Right ventricle myocardium inferior (tissue), 1 donor: ENCODE measurements at regions of chr9 and their contacts with region 1.

Region 1: GRCh38 chr9:134434894-134435506 is 108.7 kb downstream of the RXRA start:
- DNase-seq: peak; percentile 97
- ATAC-seq: peak; percentile 86

Region 2: GRCh38 chr9:134163353-134164196 is 271.4 kb before region 1 on chr9:
- intact Hi-C with region 1: loop called (anchors 2 kb)
- DNase-seq: peak; percentile 84
- ATAC-seq: peak; percentile 14

Region 3: DNA sequence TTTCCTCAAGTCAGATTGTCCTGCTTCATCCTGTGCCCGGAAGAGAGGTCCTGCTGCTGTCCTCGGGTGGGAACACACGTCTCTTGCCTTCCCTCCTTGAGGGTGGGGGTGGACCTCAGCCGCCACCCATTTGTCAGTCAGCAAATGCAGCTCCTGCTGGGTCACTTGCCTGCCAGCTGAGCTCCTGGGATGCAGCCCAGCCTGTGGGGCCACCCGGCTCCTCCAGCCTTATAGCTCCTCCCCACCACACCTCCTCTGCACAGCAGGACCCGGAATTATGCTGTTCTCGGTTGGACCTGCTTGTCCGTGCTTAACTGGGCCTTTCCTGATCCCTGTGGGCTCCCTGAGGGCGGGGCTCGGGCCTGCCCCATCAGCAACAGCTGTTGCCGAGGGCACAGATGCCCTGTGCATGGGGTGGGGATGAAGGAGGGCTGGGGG is 56.1 kb before region 1 on chr9:
- intact Hi-C with region 1: loop called (anchors 5 kb)
- DNase-seq: no peak
- ATAC-seq: peak; percentile 31

Region 4: GRCh38 chr9:134407123-134407808 is 27.7 kb before region 1 on chr9:
- intact Hi-C with region 1: loop called (anchors 2 kb)
- DNase-seq: peak; percentile 97
- ATAC-seq: peak; percentile 74

Region 5: DNA sequence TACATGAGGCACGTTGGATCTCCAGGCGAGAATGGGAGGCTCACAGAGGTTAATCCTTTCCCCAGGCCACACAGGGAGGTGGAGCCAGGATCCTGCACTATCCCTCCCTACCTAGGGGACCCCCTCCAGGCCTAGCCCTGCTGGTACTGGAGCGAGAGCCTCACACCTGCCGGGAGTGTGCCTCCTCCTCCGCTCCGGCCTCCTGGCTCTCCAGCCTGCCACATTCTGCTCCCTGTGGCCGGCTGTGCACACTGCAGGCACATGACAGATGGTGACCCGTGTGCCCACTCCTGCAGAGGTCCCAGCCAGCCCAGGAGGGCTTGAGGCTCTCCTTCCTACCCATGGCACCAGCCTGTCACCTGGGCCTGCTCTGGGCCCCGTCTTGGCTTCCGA is 15.3 kb before region 1 on chr9:
- intact Hi-C with region 1: no loop called
- DNase-seq: no peak
- ATAC-seq: no peak